CD14-positive monocyte (primary cell): ENCODE measurements at regions of chr12 and their contacts with region 1.

Region 1: GRCh38 chr12:27034607-27035293 is 12.4 kb downstream of the MED21 start:
- DNase-seq: no peak
- H3K4me3 ChIP-seq: no peak overlapping the region
- H3K4me3 Mint-ChIP-seq: no peak overlapping the region
- H3K27ac ChIP-seq: no peak overlapping the region
- H3K27ac Mint-ChIP-seq: no peak overlapping the region
- H3K4me1 ChIP-seq: peaks cover 4 to 5% of the 10 kb centered on the region in 2 donors
- H3K4me1 Mint-ChIP-seq: peaks cover 5% of the 10 kb centered on the region
- H3K27me3 ChIP-seq: no peaks in the 10 kb centered on the region
- H3K27me3 Mint-ChIP-seq: no peaks in the 10 kb centered on the region
- CTCF ChIP-seq: no peak

Region 2: DNA sequence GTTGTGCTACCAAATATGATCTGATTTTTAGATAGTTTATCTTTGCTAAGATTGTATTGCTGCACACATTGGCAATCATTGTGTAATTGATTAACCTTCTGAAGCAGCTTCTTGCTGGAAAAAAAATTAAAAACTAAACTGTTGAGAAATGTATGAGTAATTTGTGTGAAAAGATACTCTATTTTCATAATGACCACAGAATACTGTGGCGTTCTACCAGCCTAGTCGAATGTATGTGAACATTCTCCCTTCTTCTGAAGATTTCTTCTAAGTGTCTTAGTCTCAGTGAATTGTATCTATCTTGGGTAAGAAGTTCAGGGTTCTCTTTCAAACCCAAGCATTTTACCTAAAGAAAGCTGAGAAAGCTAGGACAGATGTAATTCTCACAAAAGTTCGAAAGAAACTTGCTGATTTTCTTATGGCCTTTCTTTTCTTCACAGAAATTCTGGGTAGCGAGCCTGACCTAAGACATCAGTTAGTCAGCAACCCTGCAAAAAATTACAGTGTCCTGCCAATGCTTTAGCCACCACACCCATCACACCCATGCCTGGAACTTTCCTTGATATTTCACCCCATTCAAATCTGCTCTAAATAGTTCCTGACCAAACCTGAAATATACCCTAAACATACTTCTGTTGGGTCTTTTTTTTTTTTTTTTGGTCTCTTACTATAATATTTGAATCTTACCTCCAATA is 74.7 kb after region 1 on chr12:
- intact Hi-C with region 1: loop called in 1 of 2 experiments (anchors 10 kb)
- DNase-seq: no peak
- H3K4me3 ChIP-seq: no peak overlapping the region
- H3K4me3 Mint-ChIP-seq: no peak overlapping the region
- H3K27ac ChIP-seq: no peak overlapping the region
- H3K27ac Mint-ChIP-seq: no peak overlapping the region
- H3K4me1 ChIP-seq: peaks cover 10% of the 10 kb centered on the region in 2 donors
- H3K4me1 Mint-ChIP-seq: peaks cover 16% of the 10 kb centered on the region
- H3K27me3 ChIP-seq: no peaks in the 10 kb centered on the region
- H3K27me3 Mint-ChIP-seq: peaks cover 0 to 1% (median 0%) of the 10 kb centered on the region in 3 donors
- CTCF ChIP-seq: no peak